ENCODE measurements at regions of chr15 and their contacts with region 1.

Region 1: GRCh38 chr15:37995461-37996347 is 61.3 kb downstream of the TMCO5A start:
- DNase-seq: peak in 2 of 10 donors; percentile 40 to 58
- H3K4me3 ChIP-seq: peak overlapping the region in 50 of 59 donors; percentile 0 to 56 (median 28)
- H3K27ac ChIP-seq: peak overlapping the region; percentile 2 to 91 (median 81)
- H3K27me3 ChIP-seq: no peaks in the 10 kb centered on the region
- CTCF ChIP-seq: peak; percentile 61 to 98 (median 82)

Region 2: DNA sequence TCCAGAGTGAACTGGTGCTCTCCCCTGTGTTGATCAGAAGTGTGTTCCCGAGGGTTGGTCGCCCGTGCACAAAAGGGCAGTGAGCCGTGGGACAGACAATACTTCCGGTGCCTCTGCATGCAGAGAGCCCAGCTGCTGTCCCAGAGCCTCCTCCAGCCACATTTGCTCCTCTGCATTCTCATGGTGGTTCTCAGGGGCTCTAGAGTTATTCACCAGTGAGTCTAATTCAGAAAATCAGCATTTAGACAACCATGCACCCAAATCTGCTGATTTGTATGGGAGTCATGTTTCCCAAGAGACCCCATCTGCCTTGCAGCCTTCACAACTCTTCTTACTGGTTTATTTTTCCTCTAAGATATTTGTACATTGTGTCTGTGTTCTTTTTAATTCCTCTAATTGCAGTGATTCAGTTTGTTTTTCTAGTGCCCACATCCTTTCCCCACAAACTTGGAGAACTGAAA is 150.0 kb after region 1 on chr15:
- intact Hi-C with region 1: no loop called
- DNase-seq: peak in 5 of 10 donors; percentile 10 to 41 (median 31)
- H3K4me3 ChIP-seq: peak overlapping the region in 53 of 59 donors; percentile 7 to 59 (median 35)
- H3K27ac ChIP-seq: peak overlapping the region in 12 of 59 donors; percentile 11 to 54 (median 40)
- H3K27me3 ChIP-seq: no peaks in the 10 kb centered on the region
- CTCF ChIP-seq: no peak

Region 3: DNA sequence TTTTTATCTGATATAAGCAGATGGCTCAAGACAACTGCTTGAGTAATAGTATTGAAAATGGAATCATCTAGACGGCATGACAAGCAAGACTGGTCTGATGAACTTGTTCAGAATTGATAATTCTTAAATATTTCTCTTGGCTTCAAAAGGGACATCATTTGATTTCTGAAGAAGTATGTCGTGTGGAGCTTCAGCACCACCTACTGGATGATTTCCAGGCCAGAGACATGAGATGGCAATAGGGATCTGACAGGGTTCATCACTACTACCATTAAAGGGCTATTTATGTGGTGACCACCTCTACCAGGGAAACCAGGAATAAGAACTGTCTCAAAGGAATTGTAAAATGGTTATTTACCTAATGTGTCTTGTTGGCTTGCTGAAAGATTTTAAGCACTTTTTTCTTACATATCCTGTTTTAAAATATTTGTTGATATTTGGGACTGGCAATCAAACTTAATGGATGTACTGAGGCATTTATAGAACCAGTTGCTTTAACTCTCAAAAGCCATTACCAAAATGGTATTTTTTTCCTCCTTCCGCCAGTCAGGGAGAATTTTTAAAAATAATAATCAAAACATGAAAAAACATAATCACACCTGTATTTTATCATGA is 358.7 kb after region 1 on chr15:
- intact Hi-C with region 1: loop called (anchors 2 to 5 kb)
- DNase-seq: peak in 8 of 10 donors; percentile 24 to 89 (median 55)
- H3K4me3 ChIP-seq: no peak overlapping the region
- H3K27ac ChIP-seq: peak overlapping the region in 8 of 59 donors; percentile 3 to 57 (median 24)
- H3K27me3 ChIP-seq: no peaks in the 10 kb centered on the region
- CTCF ChIP-seq: peak; percentile 38 to 98 (median 86)

Region 4: DNA sequence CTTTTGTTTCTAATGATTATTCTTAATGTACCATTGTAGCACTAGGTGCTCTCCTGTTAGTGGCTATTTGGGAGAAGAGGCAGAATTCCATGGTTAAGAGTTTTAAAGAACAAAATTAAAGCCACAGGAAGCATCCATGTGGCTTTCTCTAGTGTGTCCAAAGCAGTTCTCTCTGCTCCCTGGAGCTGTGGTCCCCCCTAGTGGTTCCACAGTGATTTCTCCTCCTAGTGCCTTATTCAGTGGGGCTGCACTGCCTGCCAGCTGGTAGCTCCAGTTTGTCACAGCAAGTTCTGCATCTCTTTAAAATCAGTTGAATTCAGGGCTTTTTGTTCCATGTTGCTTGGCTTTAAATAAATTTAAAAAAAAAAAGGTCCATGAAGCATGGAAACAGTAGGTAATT is 418.7 kb after region 1 on chr15:
- intact Hi-C with region 1: loop called (anchors 10 kb)
- DNase-seq: peak in 9 of 10 donors; percentile 13 to 76 (median 55)
- H3K4me3 ChIP-seq: no peak overlapping the region
- H3K27ac ChIP-seq: no peak overlapping the region
- H3K27me3 ChIP-seq: peaks cover 0 to 1% (median 0%) of the 10 kb centered on the region in 45 donors
- CTCF ChIP-seq: peak; percentile 33 to 76 (median 64)

Region 5: DNA sequence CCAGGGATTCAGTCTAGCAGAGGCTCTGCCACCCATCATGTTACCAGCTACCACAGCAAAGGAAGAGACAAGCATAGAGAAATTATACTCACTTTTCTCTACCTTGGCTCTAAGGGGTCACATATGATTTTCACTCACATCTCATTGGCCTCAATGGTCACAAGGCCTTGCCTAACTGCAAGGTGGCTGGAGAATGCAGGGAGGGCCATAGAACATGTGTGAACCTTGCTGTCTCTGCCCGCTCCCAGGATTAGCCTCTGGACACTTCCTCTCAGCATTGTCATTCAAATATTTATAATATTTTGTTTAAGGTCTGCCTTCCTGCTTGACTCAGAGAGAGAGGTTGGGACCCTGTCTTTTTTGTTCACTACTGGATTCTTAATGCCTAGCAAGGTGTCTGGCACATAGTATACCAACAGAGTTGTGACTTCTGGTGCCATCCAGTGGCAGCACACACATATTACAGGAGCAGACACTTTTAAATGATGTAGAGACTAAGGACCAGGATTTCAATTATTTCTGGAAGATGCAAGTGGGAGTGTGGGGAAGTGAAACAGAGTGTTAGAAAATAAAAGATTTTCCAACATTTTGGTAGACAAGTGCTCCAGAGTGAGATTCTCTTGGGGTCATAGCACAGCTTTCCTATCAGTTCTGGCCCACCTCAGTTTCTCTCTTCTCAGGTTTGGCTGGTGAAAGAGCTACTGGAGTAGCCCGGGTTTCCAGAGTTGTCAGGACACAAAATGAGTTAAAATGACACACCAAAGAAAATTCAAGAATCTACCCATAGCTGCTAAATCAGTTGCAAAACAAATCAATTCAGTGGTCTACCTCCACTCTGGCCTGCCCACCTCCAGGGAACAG is 687.9 kb after region 1 on chr15:
- intact Hi-C with region 1: loop called (anchors 5 to 10 kb)
- DNase-seq: peak; percentile 23 to 76 (median 60)
- H3K4me3 ChIP-seq: no peak overlapping the region
- H3K27ac ChIP-seq: no peak overlapping the region
- H3K27me3 ChIP-seq: no peaks in the 10 kb centered on the region
- CTCF ChIP-seq: peak; percentile 49 to 91 (median 80)

Region 6: GRCh38 chr15:38699633-38700230 is 704.0 kb after region 1 on chr15:
- intact Hi-C with region 1: loop called in 1 of 2 experiments (anchors 5 kb)
- DNase-seq: peak; percentile 23 to 72 (median 54)
- H3K4me3 ChIP-seq: no peak overlapping the region
- H3K27ac ChIP-seq: no peak overlapping the region
- H3K27me3 ChIP-seq: peaks cover 0 to under 1% (median 0%) of the 10 kb centered on the region in 45 donors
- CTCF ChIP-seq: peak; percentile 47 to 89 (median 79)